ENCODE measurements at regions of chr10 and their contacts with region 1.

Region 1: GRCh38 chr10:35126530-35127296 is at the start of gene CREM:
- DNase-seq: peak; percentile 100
- ATAC-seq: peak; percentile 91
- H3K4me3 Mint-ChIP-seq: peak within 1 kb of the TSS; percentile 97
- H3K27ac Mint-ChIP-seq: peak within 1 kb of the TSS; percentile 98
- H3K4me1 Mint-ChIP-seq: peaks cover 51% of the 10 kb centered on the region
- H3K27me3 Mint-ChIP-seq: no peaks in the 10 kb centered on the region
- CTCF ChIP-seq: peak; percentile 69
- total RNA-seq, gene CREM: 121 to 131 TPM

Region 2: GRCh38 chr10:35153716-35154479 is 27.2 kb after region 1 on chr10:
- CTCF ChIA-PET with region 1: interaction called, 8 read pairs
- POLR2A ChIA-PET with region 1: interaction called, 30 read pairs
- intact Hi-C with region 1: no loop called
- DNase-seq: no peak
- ATAC-seq: no peak
- H3K4me3 Mint-ChIP-seq: no peak overlapping the region
- H3K27ac Mint-ChIP-seq: no peak overlapping the region
- H3K4me1 Mint-ChIP-seq: peaks cover 39% of the 10 kb centered on the region
- H3K27me3 Mint-ChIP-seq: no peaks in the 10 kb centered on the region
- CTCF ChIP-seq: no peak

Region 3: DNA sequence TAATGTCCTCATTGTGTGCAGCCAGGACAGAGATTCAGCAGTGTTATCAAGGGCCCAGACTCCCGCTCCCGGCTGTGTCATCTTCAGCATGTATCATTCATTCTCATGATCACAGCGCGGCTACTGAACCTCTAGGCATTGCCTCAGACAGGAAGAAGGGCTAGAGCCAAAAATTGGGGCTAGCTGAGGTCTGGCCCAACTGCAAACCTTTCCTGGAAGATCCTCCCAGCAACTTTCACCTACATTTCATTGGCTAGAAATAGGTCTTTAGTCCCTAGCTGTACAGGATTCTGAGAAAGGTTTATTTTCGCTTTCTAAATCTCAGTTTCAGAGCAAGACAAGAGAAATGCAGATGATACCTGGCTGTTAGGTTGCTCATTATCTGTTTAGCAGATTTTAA is 81.8 kb after region 1 on chr10:
- CTCF ChIA-PET with region 1: interaction called, 255 read pairs
- POLR2A ChIA-PET with region 1: interaction called, 17 read pairs
- intact Hi-C with region 1: no loop called
- DNase-seq: peak; percentile 81
- ATAC-seq: peak; percentile 92
- H3K4me3 Mint-ChIP-seq: peak overlapping the region; percentile 53
- H3K27ac Mint-ChIP-seq: peak overlapping the region; percentile 88
- H3K4me1 Mint-ChIP-seq: peaks cover 29% of the 10 kb centered on the region
- H3K27me3 Mint-ChIP-seq: no peaks in the 10 kb centered on the region
- CTCF ChIP-seq: no peak

Region 4: DNA sequence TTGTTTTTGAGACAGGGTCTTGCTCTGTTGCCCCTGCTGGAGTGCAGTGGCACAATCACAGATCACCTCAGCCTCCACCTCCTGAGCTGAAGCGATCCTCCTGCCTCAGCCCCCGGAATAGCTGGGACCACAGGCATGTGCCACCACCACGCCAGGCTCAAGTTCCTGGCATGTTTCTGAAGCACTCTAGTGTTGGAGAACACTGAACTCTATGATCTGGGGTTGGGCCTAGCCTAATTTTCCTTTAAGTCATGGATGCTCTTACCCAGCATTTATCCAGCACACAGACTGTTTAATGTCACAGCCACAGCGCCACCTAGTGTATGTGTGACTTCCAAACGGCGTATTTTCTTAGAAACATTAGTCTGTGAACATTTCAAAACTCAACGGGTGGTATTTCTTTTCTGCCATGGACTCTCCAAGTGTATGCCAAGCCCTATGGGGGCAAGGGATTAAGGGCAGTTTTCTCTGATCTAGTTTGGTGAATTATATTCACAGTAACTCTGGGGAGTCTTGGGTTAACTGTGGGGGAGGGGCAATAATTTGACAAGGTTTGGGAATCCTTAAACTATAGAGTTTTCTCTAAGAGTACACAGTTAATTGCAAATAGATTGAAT is 91.7 kb after region 1 on chr10:
- CTCF ChIA-PET with region 1: interaction called, 255 read pairs
- POLR2A ChIA-PET with region 1: interaction called, 19 read pairs
- intact Hi-C with region 1: no loop called
- DNase-seq: peak; percentile 96
- ATAC-seq: peak; percentile 78
- H3K4me3 Mint-ChIP-seq: peak overlapping the region; percentile 37
- H3K27ac Mint-ChIP-seq: peak overlapping the region; percentile 91
- H3K4me1 Mint-ChIP-seq: peaks cover 43% of the 10 kb centered on the region
- H3K27me3 Mint-ChIP-seq: peaks cover 4% of the 10 kb centered on the region
- CTCF ChIP-seq: peak; percentile 88

Region 5: GRCh38 chr10:35336084-35336831 is 209.5 kb after region 1 on chr10 and contains the start of gene CCNY:
- CTCF ChIA-PET with region 1: no interaction called
- POLR2A ChIA-PET with region 1: interaction called, 6 read pairs
- intact Hi-C with region 1: loop called (anchors 10 kb)
- DNase-seq: peak; percentile 78
- ATAC-seq: peak; percentile 67
- H3K4me3 Mint-ChIP-seq: peak within 1 kb of the TSS; percentile 92
- H3K27ac Mint-ChIP-seq: peak within 1 kb of the TSS; percentile 90
- H3K4me1 Mint-ChIP-seq: peaks cover 59% of the 10 kb centered on the region
- H3K27me3 Mint-ChIP-seq: no peaks in the 10 kb centered on the region
- CTCF ChIP-seq: no peak
- total RNA-seq, gene CCNY: 42.2 to 48.8 TPM

Measured in activated CD8-positive, alpha-beta T cell treated with anti-CD3 and anti-CD28 coated beads for 36 hours (primary cell).